Posterior cingulate gyrus (tissue), 11 donors: ENCODE measurements at regions of chr1 and their contacts with region 1.

Region 1: DNA sequence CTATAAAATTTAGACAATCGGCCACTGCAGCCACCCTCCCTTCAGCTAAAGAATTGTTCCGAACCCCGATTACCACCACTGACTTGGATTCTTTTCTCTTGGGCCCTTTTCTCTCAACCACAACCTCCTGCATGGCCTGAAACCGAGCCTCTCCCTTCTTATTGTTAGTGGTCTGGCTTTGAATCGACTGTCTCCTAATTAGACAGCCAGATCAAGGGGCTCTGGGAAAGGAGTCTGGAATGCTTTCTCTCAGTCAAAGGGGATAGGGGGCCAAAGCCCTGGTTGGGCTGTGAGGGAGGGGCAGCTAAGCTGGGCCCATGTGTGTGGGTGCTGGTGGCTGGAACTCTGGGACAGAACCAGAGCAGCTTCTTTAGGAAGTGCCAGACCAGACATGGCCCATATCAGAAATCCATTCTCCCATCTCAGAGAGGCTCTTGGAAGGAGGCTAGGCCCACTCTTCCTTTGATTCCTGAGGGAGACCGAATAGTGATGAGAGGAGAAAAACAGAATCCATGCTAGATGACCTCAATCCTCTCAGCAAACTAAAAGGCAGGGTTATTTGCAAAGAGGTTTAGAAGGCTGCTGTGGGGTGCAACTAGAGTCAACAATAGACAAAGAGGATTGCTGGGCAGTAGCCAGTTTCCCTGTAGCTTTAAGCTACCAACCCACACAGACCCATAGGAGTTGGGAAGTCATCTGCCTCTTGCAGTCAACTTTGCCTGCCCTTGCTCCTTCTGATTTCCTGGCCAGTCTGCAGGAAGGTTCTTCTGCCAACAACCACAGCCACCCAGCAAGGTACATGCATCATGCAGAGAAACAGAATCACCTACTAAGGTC is 117.6 kb downstream of the AK5 start:
- DNase-seq: peak in 5 of 10 donors; percentile 23 to 82 (median 64)

Region 2: GRCh38 chr1:77514921-77515776 is 115.7 kb after region 1 on chr1:
- intact Hi-C with region 1: loop called (anchors 5 kb)
- DNase-seq: peak in 9 of 10 donors; percentile 37 to 95 (median 55)

Region 3: GRCh38 chr1:77533660-77534305 is 134.3 kb after region 1 on chr1:
- intact Hi-C with region 1: loop called (anchors 5 kb)
- DNase-seq: peak; percentile 40 to 95 (median 68)

Region 4: DNA sequence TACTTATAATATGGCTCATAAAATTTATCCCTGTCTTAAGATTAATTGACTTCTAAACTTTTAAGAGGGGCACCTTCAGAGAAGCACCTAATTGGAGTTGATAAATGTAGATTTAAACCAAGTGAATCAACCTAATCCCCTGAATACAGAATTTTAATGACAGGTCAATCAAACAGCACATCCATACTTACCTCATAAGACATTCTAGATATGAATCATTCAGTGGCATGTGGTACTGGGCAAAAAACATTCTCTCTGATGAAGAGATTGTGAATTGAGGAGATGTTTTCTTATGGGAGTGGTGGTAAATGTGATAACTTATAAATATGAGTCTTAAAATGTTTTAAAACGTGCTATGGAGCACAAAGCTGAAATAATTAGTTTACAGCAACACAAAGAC is 923.8 kb after region 1 on chr1:
- intact Hi-C with region 1: no loop called
- DNase-seq: no peak